ENCODE measurements at regions of chr7 and their contacts with region 1.

Region 1: GRCh38 chr7:47945261-47946001 is 2.8 kb downstream of the PKD1L1 start:
- DNase-seq: peak; percentile 62
- ATAC-seq: peak; percentile 22; the same call in 1 of the 2 replicates
- H3K4me3 ChIP-seq: no peak overlapping the region
- H3K27ac ChIP-seq: no peak overlapping the region
- H3K4me1 ChIP-seq: peaks cover 14% of the 10 kb centered on the region
- H3K27me3 ChIP-seq: no peaks in the 10 kb centered on the region
- CTCF ChIP-seq: peak; percentile 82
- POLR2A ChIP-seq: no peak
- RAD21 ChIP-seq: peak; percentile 72

Region 2: DNA sequence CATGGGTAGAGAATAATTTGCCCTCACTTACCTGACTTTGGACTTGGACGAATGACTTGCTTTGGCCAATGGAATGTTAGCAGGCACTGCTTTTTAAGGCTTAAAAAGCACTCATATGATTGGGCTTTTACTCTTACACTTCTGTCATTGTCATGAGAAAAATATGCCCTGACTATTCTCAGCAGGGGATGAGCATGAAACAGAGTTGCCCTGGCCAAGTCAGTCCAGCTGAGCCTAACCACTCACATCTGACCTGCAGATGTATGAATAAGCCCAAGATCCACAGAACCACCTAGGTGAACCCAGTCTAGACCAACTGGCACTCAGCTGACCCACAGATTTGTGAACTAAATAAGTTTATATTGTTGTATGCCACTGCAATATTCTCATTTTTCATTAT is 937.0 kb before region 1 on chr7:
- CTCF ChIA-PET with region 1: no interaction called
- POLR2A ChIA-PET with region 1: no interaction called
- dilution Hi-C with region 1: no loop called
- in situ Hi-C with region 1: no loop called
- intact Hi-C with region 1: no loop called
- DNase-seq: peak; percentile 3
- ATAC-seq: no peak
- H3K4me3 ChIP-seq: no peak overlapping the region
- H3K27ac ChIP-seq: no peak overlapping the region
- H3K4me1 ChIP-seq: no peaks in the 10 kb centered on the region
- H3K27me3 ChIP-seq: no peaks in the 10 kb centered on the region
- CTCF ChIP-seq: no peak
- POLR2A ChIP-seq: no peak
- RAD21 ChIP-seq: no peak

Region 3: GRCh38 chr7:47435889-47436312 is 509.5 kb before region 1 on chr7:
- CTCF ChIA-PET with region 1: no interaction called
- POLR2A ChIA-PET with region 1: no interaction called
- dilution Hi-C with region 1: no loop called
- in situ Hi-C with region 1: loop called (anchors 10 kb)
- intact Hi-C with region 1: no loop called
- DNase-seq: peak; percentile 81
- ATAC-seq: peak; percentile 94
- H3K4me3 ChIP-seq: no peak overlapping the region
- H3K27ac ChIP-seq: no peak overlapping the region
- H3K4me1 ChIP-seq: 0 out of 2 replicates have a peak, but pooled peaks cover 2% of the 10 kb centered on the region
- H3K27me3 ChIP-seq: no peaks in the 10 kb centered on the region
- CTCF ChIP-seq: peak; percentile 65
- POLR2A ChIP-seq: no peak
- RAD21 ChIP-seq: peak; percentile 80

Region 4: GRCh38 chr7:47610506-47611044 is 334.9 kb before region 1 on chr7:
- CTCF ChIA-PET with region 1: no interaction called
- POLR2A ChIA-PET with region 1: no interaction called
- dilution Hi-C with region 1: no loop called
- in situ Hi-C with region 1: no loop called
- intact Hi-C with region 1: loop called (anchors 1 kb)
- DNase-seq: peak; percentile 94
- ATAC-seq: peak; percentile 85
- H3K4me3 ChIP-seq: no peak overlapping the region
- H3K27ac ChIP-seq: peak overlapping the region; percentile 86
- H3K4me1 ChIP-seq: peaks cover 19% of the 10 kb centered on the region
- H3K27me3 ChIP-seq: no peaks in the 10 kb centered on the region; the same call in 1 of the 2 replicates
- CTCF ChIP-seq: no peak
- POLR2A ChIP-seq: peak; percentile 25; the same call in 1 of the 2 replicates
- RAD21 ChIP-seq: peak; percentile 8; the same call in 1 of the 2 replicates

Region 5: DNA sequence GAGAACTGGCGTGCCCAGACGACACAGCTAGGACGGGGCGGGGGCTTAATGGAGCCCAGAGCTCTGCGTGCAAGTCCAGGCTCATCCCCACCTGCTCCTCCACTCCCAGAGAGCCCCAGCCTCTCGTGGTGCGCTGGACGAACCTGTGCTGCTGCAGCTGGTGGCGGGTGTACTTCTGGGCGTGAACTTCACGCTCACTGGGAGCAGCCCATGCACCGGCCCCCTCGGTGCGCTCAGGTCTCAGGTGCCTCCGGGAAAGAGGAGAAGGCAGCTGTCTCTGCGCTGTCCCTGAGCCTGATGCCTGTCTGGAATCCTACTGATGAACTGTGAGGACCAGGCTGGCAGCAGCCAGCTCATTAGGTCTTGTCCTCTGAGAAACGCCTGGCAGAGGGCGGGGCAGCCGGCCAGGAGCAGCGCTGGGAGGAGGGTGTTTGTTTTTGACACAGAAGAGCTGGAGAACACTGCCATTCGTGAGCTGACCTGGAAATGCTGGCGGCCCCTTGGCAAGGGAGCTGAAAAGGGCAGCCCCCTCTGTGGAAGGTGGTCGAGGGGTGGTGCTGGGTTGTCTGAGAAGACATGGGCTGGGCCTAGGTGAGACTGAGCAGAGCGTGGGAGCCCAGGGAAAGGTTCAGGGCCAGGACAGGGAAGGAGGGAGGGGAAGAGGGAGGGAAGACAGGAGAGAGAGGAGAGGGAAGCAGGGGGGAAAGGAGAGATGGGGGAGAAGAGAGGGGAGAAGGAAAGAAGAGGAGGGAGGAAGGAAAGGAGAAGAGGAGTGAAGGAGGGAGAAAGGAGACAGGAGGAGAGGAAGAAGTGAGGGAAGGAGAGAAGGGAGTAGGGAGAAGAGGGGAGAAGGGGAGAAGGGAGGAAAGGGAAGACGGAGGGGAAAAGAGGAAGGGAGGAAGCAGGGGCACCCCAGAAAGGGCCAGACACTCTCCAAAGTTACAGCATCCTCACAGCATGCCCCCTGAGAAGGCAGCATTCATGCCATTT is 310.0 kb before region 1 on chr7:
- CTCF ChIA-PET with region 1: no interaction called
- POLR2A ChIA-PET with region 1: no interaction called
- dilution Hi-C with region 1: no loop called
- in situ Hi-C with region 1: no loop called
- intact Hi-C with region 1: no loop called
- DNase-seq: no peak
- ATAC-seq: no peak; the same call in 1 of the 2 replicates
- H3K4me3 ChIP-seq: no peak overlapping the region
- H3K27ac ChIP-seq: no peak overlapping the region; the same call in 1 of the 2 replicates
- H3K4me1 ChIP-seq: peaks cover 18% of the 10 kb centered on the region
- H3K27me3 ChIP-seq: no peaks in the 10 kb centered on the region
- CTCF ChIP-seq: no peak
- POLR2A ChIP-seq: no peak
- RAD21 ChIP-seq: no peak

Region 6: GRCh38 chr7:47968847-47969774 is 23.7 kb after region 1 on chr7:
- CTCF ChIA-PET with region 1: interaction called, 13 read pairs
- POLR2A ChIA-PET with region 1: no interaction called
- dilution Hi-C with region 1: no loop called
- in situ Hi-C with region 1: no loop called
- intact Hi-C with region 1: loop called (anchors 1 kb)
- DNase-seq: peak; percentile 74
- ATAC-seq: peak; percentile 86
- H3K4me3 ChIP-seq: no peak overlapping the region
- H3K27ac ChIP-seq: no peak overlapping the region
- H3K4me1 ChIP-seq: peaks cover 7% of the 10 kb centered on the region; the same call in 1 of the 2 replicates
- H3K27me3 ChIP-seq: no peaks in the 10 kb centered on the region
- CTCF ChIP-seq: peak; percentile 83
- POLR2A ChIP-seq: no peak
- RAD21 ChIP-seq: peak; percentile 75

Region 7: GRCh38 chr7:48154792-48155413 is 209.5 kb after region 1 on chr7:
- CTCF ChIA-PET with region 1: interaction called, 12 read pairs
- POLR2A ChIA-PET with region 1: no interaction called
- dilution Hi-C with region 1: no loop called
- in situ Hi-C with region 1: no loop called
- intact Hi-C with region 1: loop called (anchors 1 kb)
- DNase-seq: peak; percentile 57
- ATAC-seq: peak; percentile 93
- H3K4me3 ChIP-seq: no peak overlapping the region
- H3K27ac ChIP-seq: no peak overlapping the region
- H3K4me1 ChIP-seq: peaks cover 3% of the 10 kb centered on the region; the same call in 1 of the 2 replicates
- H3K27me3 ChIP-seq: peaks cover 8% of the 10 kb centered on the region
- CTCF ChIP-seq: peak; percentile 78
- POLR2A ChIP-seq: no peak
- RAD21 ChIP-seq: peak; percentile 83

Measured in IMR-90 (cell line).